CD4-positive, alpha-beta memory T cell (primary cell): ENCODE measurements at regions of chr11 and their contacts with region 1.

Region 1: DNA sequence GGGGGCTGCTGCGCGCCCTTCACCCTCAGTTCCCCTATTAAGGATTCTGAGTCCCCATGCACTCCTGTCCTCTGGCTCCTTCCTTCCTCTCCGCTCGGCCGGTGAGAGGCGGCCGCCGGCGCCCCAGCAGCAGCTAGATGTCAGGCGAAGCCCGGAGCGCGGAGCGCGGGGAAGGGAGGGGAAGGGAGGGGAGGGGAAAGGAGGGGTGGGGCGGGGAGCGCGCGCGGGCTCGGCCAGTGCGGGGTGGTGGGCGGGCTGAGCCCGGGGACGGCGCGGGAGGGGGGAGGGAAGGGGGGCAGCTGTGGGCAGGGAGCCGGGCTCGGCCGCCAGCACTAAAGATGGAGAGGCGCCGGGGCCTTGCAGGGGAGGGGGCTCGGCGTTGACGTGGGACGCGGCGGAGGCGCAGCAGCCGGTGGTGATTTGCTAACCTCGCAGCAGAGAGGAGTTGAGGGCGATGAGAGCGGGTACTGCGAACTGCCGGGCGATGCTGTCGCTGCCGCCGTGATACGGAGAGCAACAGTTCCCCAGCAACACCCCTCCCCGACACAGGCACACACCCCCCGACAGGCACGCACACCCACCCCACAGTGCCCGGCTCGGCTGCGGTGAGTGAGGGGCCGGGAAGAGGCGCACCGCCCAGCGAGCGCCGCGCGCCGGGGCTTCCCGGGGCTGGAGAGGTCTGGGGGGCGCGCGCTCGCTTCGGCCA is at the start of gene ZBTB16:
- DNase-seq: peak; percentile 59 to 76 (median 67)
- H3K4me3 ChIP-seq: peak within 1 kb of the TSS; percentile 52 to 57
- H3K4me3 Mint-ChIP-seq: peak within 1 kb of the TSS; percentile 87 to 97 (median 92)
- H3K27ac ChIP-seq: peak within 1 kb of the TSS; percentile 43
- H3K27ac Mint-ChIP-seq: peak within 1 kb of the TSS; percentile 55 to 91 (median 85)
- H3K4me1 ChIP-seq: peaks cover 17% of the 10 kb centered on the region
- H3K4me1 Mint-ChIP-seq: peaks cover 5 to 34% (median 16%) of the 10 kb centered on the region in 4 donors
- H3K27me3 ChIP-seq: peaks cover 16% of the 10 kb centered on the region
- H3K27me3 Mint-ChIP-seq: peaks cover 1 to 8% of the 10 kb centered on the region in 2 donors
- total RNA-seq, gene ZBTB16: 5.6 to 8.2 TPM

Region 2: DNA sequence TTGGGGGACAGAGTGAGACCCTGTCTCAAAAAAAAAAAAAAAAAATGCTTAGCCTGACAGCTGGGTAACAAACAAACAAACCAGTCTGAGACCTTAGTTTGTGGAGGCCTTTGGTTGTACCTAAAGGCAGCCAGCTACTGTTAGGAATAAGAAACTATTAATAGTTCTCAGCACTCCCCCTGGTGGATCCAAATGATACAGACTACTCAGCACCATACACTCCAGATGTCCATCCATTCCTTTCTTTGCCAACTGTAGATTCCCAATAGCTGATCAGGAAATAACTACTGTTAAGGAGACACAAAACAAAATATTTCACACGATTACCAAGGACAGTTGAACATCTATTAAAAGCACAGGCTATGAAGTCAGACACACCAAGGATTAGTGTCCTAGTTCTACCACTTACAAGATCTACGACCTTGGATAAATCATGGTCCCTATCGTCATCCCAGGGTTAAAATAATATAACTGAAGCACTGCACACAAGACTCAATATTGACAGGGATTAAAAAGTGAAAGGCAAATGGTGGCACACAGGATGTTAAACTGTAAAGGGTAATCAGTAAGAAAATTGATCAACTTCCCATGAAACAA is 262.7 kb before region 1 on chr11:
- CTCF ChIA-PET with region 1: no interaction called
- POLR2A ChIA-PET with region 1: no interaction called
- intact Hi-C with region 1: no loop called
- DNase-seq: peak in 4 of 5 donors; percentile 12 to 20 (median 15)
- H3K4me3 ChIP-seq: no peak overlapping the region
- H3K4me3 Mint-ChIP-seq: no peak overlapping the region
- H3K27ac ChIP-seq: no peak overlapping the region
- H3K27ac Mint-ChIP-seq: peak overlapping the region in 1 of 7 donors; percentile 31
- H3K4me1 ChIP-seq: no peaks in the 10 kb centered on the region
- H3K4me1 Mint-ChIP-seq: no peaks in the 10 kb centered on the region
- H3K27me3 ChIP-seq: no peaks in the 10 kb centered on the region
- H3K27me3 Mint-ChIP-seq: no peaks in the 10 kb centered on the region

Region 3: GRCh38 chr11:114075891-114076441 is 16.5 kb after region 1 on chr11:
- CTCF ChIA-PET with region 1: interaction called, 13 read pairs
- POLR2A ChIA-PET with region 1: interaction called, 7 read pairs
- intact Hi-C with region 1: loop called (anchors 1 kb)
- DNase-seq: peak in 4 of 5 donors; percentile 48 to 64 (median 52)
- H3K4me3 ChIP-seq: no peak overlapping the region
- H3K4me3 Mint-ChIP-seq: peak overlapping the region in 7 of 8 donors; percentile 32 to 89 (median 71)
- H3K27ac ChIP-seq: no peak overlapping the region
- H3K27ac Mint-ChIP-seq: peak overlapping the region; percentile 4 to 93 (median 54)
- H3K4me1 ChIP-seq: peaks cover 72% of the 10 kb centered on the region
- H3K4me1 Mint-ChIP-seq: peaks cover 57 to 88% (median 72%) of the 10 kb centered on the region in 4 donors
- H3K27me3 ChIP-seq: no peaks in the 10 kb centered on the region
- H3K27me3 Mint-ChIP-seq: no peaks in the 10 kb centered on the region

Region 4: DNA sequence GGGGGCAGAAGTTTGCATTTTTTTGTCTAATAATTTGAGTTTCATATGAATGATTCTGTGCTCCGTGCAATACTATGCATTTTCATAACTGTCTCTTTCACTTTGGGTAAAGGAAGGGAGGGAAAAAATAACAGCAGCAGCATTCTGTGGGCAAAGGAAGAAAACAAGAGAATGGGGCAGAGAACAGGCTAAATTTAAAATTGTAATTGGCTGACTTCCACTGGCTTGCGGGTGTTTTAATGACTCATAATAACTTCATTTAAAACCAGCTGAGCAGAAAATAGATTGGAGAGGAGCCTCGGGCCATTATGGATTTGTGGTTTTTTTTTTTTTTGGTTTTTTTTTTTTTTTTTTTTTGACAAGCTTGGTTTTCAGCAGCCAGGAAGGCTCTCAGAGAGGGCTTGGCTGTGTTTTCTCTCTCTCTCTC is 107.5 kb after region 1 on chr11:
- CTCF ChIA-PET with region 1: interaction called, 3 read pairs
- POLR2A ChIA-PET with region 1: interaction called, 25 read pairs
- intact Hi-C with region 1: no loop called
- DNase-seq: peak; percentile 47 to 68 (median 64)
- H3K4me3 ChIP-seq: no peak overlapping the region
- H3K4me3 Mint-ChIP-seq: peak overlapping the region; percentile 21 to 83 (median 66)
- H3K27ac ChIP-seq: no peak overlapping the region
- H3K27ac Mint-ChIP-seq: peak overlapping the region; percentile 15 to 92 (median 81)
- H3K4me1 ChIP-seq: peaks cover 86% of the 10 kb centered on the region
- H3K4me1 Mint-ChIP-seq: peaks cover 57 to 100% (median 85%) of the 10 kb centered on the region in 4 donors
- H3K27me3 ChIP-seq: no peaks in the 10 kb centered on the region
- H3K27me3 Mint-ChIP-seq: no peaks in the 10 kb centered on the region

Region 5: GRCh38 chr11:114197799-114198500 is 138.5 kb after region 1 on chr11:
- CTCF ChIA-PET with region 1: interaction called, 18 read pairs
- POLR2A ChIA-PET with region 1: interaction called, 8 read pairs
- intact Hi-C with region 1: loop called (anchors 1 kb)
- DNase-seq: no peak
- H3K4me3 ChIP-seq: no peak overlapping the region
- H3K4me3 Mint-ChIP-seq: no peak overlapping the region
- H3K27ac ChIP-seq: no peak overlapping the region
- H3K27ac Mint-ChIP-seq: peak overlapping the region in 1 of 7 donors; percentile 66
- H3K4me1 ChIP-seq: peaks cover 8% of the 10 kb centered on the region
- H3K4me1 Mint-ChIP-seq: peaks cover 5 to 21% (median 14%) of the 10 kb centered on the region in 4 donors
- H3K27me3 ChIP-seq: no peaks in the 10 kb centered on the region
- H3K27me3 Mint-ChIP-seq: no peaks in the 10 kb centered on the region